OCI-LY7 (cell line): ENCODE measurements at regions of chr9 and their contacts with region 1.

Region 1: GRCh38 chr9:14497476-14497875 is 183.5 kb upstream of the NFIB start:
- DNase-seq: no peak
- H3K4me3 ChIP-seq: no peak overlapping the region
- H3K27ac ChIP-seq: no peak overlapping the region
- H3K4me1 ChIP-seq: no peaks in the 10 kb centered on the region
- CTCF ChIP-seq: no peak

Region 2: GRCh38 chr9:14400658-14400995 is 96.8 kb before region 1 on chr9:
- CTCF ChIA-PET with region 1: no interaction called
- POLR2A ChIA-PET with region 1: no interaction called
- intact Hi-C with region 1: no loop called
- DNase-seq: peak; percentile 8
- H3K4me3 ChIP-seq: no peak overlapping the region
- H3K27ac ChIP-seq: no peak overlapping the region
- H3K4me1 ChIP-seq: no peaks in the 10 kb centered on the region
- CTCF ChIP-seq: peak; percentile 46

Region 3: DNA sequence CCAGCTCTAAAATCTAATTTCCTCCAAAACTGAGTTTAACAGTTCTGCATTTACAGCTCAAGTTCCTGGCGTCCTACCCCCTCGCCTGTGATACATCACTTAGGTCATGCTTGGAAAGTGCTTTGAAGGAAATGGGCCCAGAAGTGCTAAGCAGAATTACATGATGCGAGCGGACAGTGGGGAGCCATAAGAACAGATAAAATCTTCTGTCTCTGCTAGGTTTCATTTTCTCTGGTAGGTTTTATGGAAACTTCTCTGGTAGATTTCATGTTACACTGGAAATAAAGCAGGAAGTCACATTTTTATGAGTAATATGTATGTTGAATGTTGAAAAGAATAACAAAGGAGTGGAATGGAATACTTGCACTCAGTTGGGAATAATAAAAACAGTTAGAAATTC is 57.4 kb after region 1 on chr9:
- CTCF ChIA-PET with region 1: no interaction called
- POLR2A ChIA-PET with region 1: no interaction called
- intact Hi-C with region 1: loop called (anchors 10 kb)
- DNase-seq: no peak
- H3K4me3 ChIP-seq: no peak overlapping the region
- H3K27ac ChIP-seq: no peak overlapping the region
- H3K4me1 ChIP-seq: no peaks in the 10 kb centered on the region
- CTCF ChIP-seq: no peak